ENCODE measurements at regions of chr12 and their contacts with region 1.

Region 1: DNA sequence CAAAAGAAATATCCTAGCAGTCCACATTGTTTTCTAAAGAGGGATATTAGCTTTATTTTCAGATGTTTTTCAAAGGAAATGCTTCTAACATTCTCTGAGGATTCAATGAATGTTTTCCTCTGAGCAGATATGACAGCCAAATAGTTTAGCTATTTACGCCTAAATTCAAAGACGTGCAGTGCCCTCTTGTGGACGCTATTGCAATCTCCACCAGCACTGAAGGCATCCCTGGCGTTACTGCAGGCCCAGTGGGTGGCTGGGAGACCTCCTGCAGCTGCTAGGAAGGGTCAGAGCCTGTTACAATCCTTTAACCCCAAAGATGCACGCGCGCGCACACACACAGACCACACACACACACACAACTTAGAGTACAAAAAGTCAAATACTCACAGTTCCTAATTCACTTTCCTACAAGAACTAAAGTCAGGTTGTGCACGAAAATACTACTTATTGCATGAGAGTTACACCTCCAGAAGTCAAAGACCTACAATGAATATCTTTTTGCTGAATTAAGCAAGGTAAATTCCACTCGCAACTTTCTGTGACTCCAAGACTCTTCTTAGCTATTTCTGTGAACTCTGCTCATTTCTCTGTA is 589.3 kb upstream of the TMEM132C start:
- DNase-seq: peak; percentile 64
- H3K4me3 Mint-ChIP-seq: no peak overlapping the region
- H3K27ac Mint-ChIP-seq: no peak overlapping the region
- H3K4me1 Mint-ChIP-seq: no peaks in the 10 kb centered on the region
- H3K27me3 Mint-ChIP-seq: no peaks in the 10 kb centered on the region

Region 2: GRCh38 chr12:127115468-127116035 is 562.1 kb before region 1 on chr12:
- CTCF ChIA-PET with region 1: no interaction called
- POLR2A ChIA-PET with region 1: no interaction called
- intact Hi-C with region 1: loop called (anchors 10 kb)
- DNase-seq: no peak
- H3K4me3 Mint-ChIP-seq: no peak overlapping the region
- H3K27ac Mint-ChIP-seq: no peak overlapping the region
- H3K4me1 Mint-ChIP-seq: no peaks in the 10 kb centered on the region
- H3K27me3 Mint-ChIP-seq: peaks cover 12% of the 10 kb centered on the region

Region 3: DNA sequence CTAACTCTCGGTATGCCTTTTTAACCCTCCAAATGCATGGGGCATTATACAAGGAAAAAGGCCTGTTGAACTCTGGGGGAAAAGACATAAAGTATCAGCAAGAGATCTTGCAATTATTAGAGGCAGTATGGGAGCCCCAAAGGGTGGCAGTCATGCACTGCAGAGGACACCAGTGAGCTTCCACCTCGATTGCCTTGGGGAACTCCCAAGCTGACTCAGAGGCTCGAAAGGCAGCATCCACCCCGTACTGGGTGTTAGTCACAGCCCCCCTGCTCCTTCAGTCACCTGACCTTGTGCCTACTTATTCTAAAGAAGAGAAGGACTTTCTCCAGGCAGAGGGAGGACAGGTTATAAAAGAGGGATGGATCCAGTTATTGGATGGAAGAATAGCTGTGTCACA is 192.1 kb before region 1 on chr12:
- CTCF ChIA-PET with region 1: interaction called, 22 read pairs
- POLR2A ChIA-PET with region 1: no interaction called
- intact Hi-C with region 1: no loop called
- DNase-seq: peak; percentile 63
- H3K4me3 Mint-ChIP-seq: no peak overlapping the region
- H3K27ac Mint-ChIP-seq: no peak overlapping the region
- H3K4me1 Mint-ChIP-seq: no peaks in the 10 kb centered on the region
- H3K27me3 Mint-ChIP-seq: peaks cover 2% of the 10 kb centered on the region

Region 4: DNA sequence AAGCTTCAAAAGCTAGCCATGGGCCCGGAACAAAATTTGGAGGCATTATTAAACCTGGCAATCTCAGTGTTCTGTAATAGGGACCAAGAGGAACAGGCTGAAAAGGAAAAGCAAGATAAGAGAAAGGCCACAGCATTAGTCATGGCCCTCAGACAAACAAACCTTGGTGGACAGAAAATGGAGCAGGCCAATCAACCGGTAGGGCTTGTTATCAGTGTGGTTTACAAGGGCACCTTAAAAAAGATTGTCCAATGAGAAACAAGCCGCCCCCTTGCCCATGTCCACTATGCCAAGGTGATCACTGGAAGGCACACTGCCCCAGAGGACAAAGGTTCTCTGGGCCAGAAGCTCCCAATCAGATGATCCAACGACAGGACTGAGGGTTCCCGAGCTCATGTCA is 64.6 kb before region 1 on chr12:
- CTCF ChIA-PET with region 1: no interaction called
- POLR2A ChIA-PET with region 1: no interaction called
- intact Hi-C with region 1: no loop called
- DNase-seq: no peak
- H3K4me3 Mint-ChIP-seq: no peak overlapping the region
- H3K27ac Mint-ChIP-seq: no peak overlapping the region
- H3K4me1 Mint-ChIP-seq: no peaks in the 10 kb centered on the region
- H3K27me3 Mint-ChIP-seq: no peaks in the 10 kb centered on the region

Region 5: GRCh38 chr12:127667131-127667685 is 10.4 kb before region 1 on chr12:
- CTCF ChIA-PET with region 1: interaction called, 17 read pairs
- POLR2A ChIA-PET with region 1: no interaction called
- intact Hi-C with region 1: no loop called
- DNase-seq: no peak
- H3K4me3 Mint-ChIP-seq: no peak overlapping the region
- H3K27ac Mint-ChIP-seq: no peak overlapping the region
- H3K4me1 Mint-ChIP-seq: no peaks in the 10 kb centered on the region
- H3K27me3 Mint-ChIP-seq: no peaks in the 10 kb centered on the region